Naive thymus-derived CD4-positive, alpha-beta T cell (primary cell): ENCODE measurements at regions of chr1 and their contacts with region 1.

Region 1: GRCh38 chr1:161382214-161383019 is 14.7 kb upstream of the CFAP126 start:
- DNase-seq: peak in 6 of 9 donors; percentile 40 to 68 (median 59)
- ATAC-seq: peak; percentile 91
- H3K4me3 ChIP-seq: no peak overlapping the region
- H3K4me3 Mint-ChIP-seq: no peak overlapping the region
- H3K27ac ChIP-seq: no peak overlapping the region
- H3K27ac Mint-ChIP-seq: peak overlapping the region in 3 of 9 donors; percentile 53 to 76 (median 73)
- H3K4me1 ChIP-seq: peaks cover 0 to 3% of the 10 kb centered on the region in 2 donors
- H3K4me1 Mint-ChIP-seq: peaks cover 0 to 19% (median 13%) of the 10 kb centered on the region in 7 donors
- H3K27me3 ChIP-seq: no peaks in the 10 kb centered on the region
- H3K27me3 Mint-ChIP-seq: no peaks in the 10 kb centered on the region

Region 2: DNA sequence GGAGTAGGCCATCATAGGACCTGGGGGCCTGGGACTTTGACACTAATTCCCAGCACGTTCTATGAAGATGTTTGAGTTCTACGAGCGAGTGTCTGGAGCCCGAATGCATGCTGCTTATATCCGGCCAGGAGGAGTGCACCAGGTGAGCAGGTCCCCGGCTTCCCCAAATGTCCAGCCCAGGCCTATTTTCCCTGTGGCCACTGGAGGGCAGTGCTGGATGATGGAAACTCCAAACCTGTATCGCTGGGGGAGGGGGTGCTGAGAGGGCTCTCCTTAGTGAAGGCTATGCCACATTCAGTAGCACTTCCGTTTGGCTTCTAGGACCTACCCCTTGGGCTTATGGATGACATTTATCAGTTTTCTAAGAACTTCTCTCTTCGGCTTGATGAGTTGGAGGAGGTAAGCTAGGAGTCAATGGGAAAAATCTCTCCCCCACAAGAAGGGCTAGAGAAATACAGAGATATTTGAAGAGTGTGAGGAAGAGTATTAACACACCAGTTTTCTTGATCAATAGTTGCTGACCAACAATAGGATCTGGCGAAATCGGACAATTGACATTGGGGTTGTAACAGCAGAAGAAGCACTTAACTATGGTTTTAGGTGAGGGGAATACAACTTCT is 172.5 kb before region 1 on chr1:
- CTCF ChIA-PET with region 1: interaction called, 10 read pairs
- POLR2A ChIA-PET with region 1: no interaction called
- intact Hi-C with region 1: loop called in 1 of 2 experiments (anchors 1 kb)
- DNase-seq: peak; percentile 53 to 79 (median 73)
- ATAC-seq: peak; percentile 98
- H3K4me3 ChIP-seq: no peak overlapping the region
- H3K4me3 Mint-ChIP-seq: no peak overlapping the region
- H3K27ac ChIP-seq: peak overlapping the region; percentile 27
- H3K27ac Mint-ChIP-seq: peak overlapping the region in 8 of 9 donors; percentile 60 to 89 (median 66)
- H3K4me1 ChIP-seq: peaks cover 0 to 31% of the 10 kb centered on the region in 2 donors
- H3K4me1 Mint-ChIP-seq: peaks cover 12 to 49% (median 41%) of the 10 kb centered on the region in 7 donors
- H3K27me3 ChIP-seq: no peaks in the 10 kb centered on the region
- H3K27me3 Mint-ChIP-seq: no peaks in the 10 kb centered on the region

Region 3: GRCh38 chr1:161726596-161727457 is 344.4 kb after region 1 on chr1:
- CTCF ChIA-PET with region 1: no interaction called
- POLR2A ChIA-PET with region 1: no interaction called
- intact Hi-C with region 1: no loop called
- DNase-seq: peak; percentile 48 to 68 (median 64)
- ATAC-seq: peak; percentile 73
- H3K4me3 ChIP-seq: peak overlapping the region; percentile 93
- H3K4me3 Mint-ChIP-seq: peak overlapping the region; percentile 89 to 100 (median 99)
- H3K27ac ChIP-seq: peak overlapping the region; percentile 59
- H3K27ac Mint-ChIP-seq: peak overlapping the region in 6 of 9 donors; percentile 38 to 94 (median 72)
- H3K4me1 ChIP-seq: peaks cover 11 to 16% of the 10 kb centered on the region in 2 donors
- H3K4me1 Mint-ChIP-seq: peaks cover 30 to 51% (median 35%) of the 10 kb centered on the region in 7 donors
- H3K27me3 ChIP-seq: no peaks in the 10 kb centered on the region
- H3K27me3 Mint-ChIP-seq: peaks cover 0 to 76% (median 0%) of the 10 kb centered on the region in 5 donors